Activated T-helper 1 cell treated with anti-CD3 and anti-CD28 coated beads, Interleukin-12 subunit alpha, Interleukin-12 subunit beta, Interleukin-2, Interleukin-4 antibody, amounts not matched to agents 30 ng/mL and 10 ng/mL and 1 ng/mL, durations not matched to agents 14 hours and 24 hours and 36 hours (primary cell): ENCODE measurements at regions of chr10 and their contacts with region 1.

Region 1: DNA sequence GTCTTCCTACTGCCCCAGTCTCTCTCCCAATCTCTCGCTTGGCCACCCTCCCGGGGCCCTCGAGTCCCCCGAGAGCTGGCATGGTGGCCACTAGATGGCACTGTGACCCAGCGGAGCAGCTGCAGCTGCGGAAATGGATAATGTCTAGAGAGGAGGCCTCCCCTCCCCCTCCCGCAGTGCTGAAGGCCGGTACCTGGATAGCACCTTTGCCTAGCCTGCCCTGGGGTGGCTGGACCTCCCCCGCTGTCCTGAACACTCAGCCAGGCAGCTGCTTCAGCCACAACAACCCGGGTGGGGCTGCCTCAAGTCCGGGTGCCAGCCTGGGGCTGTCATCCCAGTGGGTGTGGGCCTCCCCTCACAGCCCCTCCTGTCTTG is 65.2 kb downstream of the GOLGA7B start:
- DNase-seq: peak; percentile 54
- H3K4me3 Mint-ChIP-seq: no peak overlapping the region
- H3K27ac Mint-ChIP-seq: no peak overlapping the region
- H3K4me1 Mint-ChIP-seq: peaks cover 4% of the 10 kb centered on the region
- H3K27me3 Mint-ChIP-seq: peaks cover 6% of the 10 kb centered on the region

Region 2: DNA sequence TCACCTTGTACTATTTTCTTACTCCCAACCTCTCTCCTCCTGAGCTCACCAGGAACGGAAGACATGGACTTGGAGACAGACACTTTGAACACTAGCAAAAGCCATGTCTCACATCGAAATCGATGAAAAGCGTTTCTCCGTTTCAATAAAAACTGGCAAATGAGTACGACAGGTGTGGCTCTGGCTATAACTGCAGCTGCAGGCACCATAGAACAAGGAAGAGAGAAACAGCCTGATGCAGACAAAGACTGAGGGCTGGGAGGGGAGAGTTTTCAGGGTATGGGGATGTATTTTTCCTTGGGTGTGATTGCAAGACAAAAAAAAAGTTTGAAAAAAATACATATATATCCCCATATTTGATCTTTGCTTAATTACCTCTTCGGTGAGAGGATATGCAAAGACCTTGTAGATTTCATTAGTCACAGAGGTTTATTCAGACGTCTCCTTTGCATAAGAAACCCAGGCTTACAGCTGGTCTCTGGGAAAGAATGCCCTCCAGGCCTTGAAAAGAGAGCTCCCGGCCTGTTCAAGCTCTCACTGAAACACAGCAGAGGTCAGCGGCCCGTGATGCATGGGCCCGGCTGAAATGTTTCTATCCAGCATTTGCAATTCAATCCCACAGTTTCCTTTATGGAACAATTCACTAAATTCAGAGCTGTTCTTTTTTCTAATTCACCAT is 1464.2 kb before region 1 on chr10:
- intact Hi-C with region 1: no loop called
- DNase-seq: no peak
- H3K4me3 Mint-ChIP-seq: no peak overlapping the region
- H3K27ac Mint-ChIP-seq: no peak overlapping the region
- H3K4me1 Mint-ChIP-seq: no peaks in the 10 kb centered on the region
- H3K27me3 Mint-ChIP-seq: peaks cover 3% of the 10 kb centered on the region

Region 3: GRCh38 chr10:97903128-97904017 is 11.5 kb before region 1 on chr10:
- intact Hi-C with region 1: no loop called
- DNase-seq: no peak
- H3K4me3 Mint-ChIP-seq: no peak overlapping the region
- H3K27ac Mint-ChIP-seq: no peak overlapping the region
- H3K4me1 Mint-ChIP-seq: no peaks in the 10 kb centered on the region
- H3K27me3 Mint-ChIP-seq: peaks cover 1% of the 10 kb centered on the region

Region 4: GRCh38 chr10:97943294-97943693 is 28.5 kb after region 1 on chr10:
- intact Hi-C with region 1: no loop called
- DNase-seq: no peak
- H3K4me3 Mint-ChIP-seq: no peak overlapping the region
- H3K27ac Mint-ChIP-seq: no peak overlapping the region
- H3K4me1 Mint-ChIP-seq: no peaks in the 10 kb centered on the region
- H3K27me3 Mint-ChIP-seq: peaks cover 8% of the 10 kb centered on the region

Region 5: GRCh38 chr10:98028168-98028770 is 113.4 kb after region 1 on chr10:
- intact Hi-C with region 1: loop called (anchors 5 kb)
- DNase-seq: peak; percentile 27
- H3K4me3 Mint-ChIP-seq: no peak overlapping the region
- H3K27ac Mint-ChIP-seq: no peak overlapping the region
- H3K4me1 Mint-ChIP-seq: no peaks in the 10 kb centered on the region
- H3K27me3 Mint-ChIP-seq: peaks cover 39% of the 10 kb centered on the region

Region 6: DNA sequence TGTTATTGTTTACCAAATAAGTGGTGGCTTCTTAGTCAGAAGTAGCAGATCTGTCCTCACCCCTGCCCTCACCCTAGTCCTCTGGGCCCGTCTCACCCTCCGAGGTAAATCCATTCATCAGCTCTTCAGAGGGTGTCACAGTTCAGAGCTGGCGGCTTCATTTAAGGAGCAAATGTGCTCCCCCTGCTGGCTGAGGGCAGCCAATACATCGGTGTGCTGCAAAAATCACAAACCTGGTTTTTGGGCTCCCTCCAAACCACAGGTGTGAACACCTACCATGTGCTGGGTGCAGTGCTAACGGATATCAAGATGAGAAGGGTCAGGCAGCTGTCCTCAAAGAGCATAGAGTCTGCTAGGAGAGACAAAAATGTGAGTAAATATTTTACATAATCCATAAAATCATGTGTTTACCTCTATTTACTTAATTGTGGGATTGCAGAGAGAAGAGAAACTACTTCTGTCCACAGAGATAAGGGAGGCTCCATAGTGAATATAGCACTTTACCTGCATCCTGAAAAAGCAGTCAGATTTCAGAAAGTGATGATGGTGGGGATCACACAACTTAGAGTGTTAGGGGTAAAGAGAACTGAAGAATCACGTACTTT is 131.1 kb after region 1 on chr10:
- intact Hi-C with region 1: loop called (anchors 1 kb)
- DNase-seq: peak; percentile 32
- H3K4me3 Mint-ChIP-seq: no peak overlapping the region
- H3K27ac Mint-ChIP-seq: no peak overlapping the region
- H3K4me1 Mint-ChIP-seq: no peaks in the 10 kb centered on the region
- H3K27me3 Mint-ChIP-seq: peaks cover 29% of the 10 kb centered on the region

Region 7: GRCh38 chr10:98309366-98310355 is 394.8 kb after region 1 on chr10:
- intact Hi-C with region 1: loop called (anchors 1 kb)
- DNase-seq: no peak
- H3K4me3 Mint-ChIP-seq: no peak overlapping the region
- H3K27ac Mint-ChIP-seq: no peak overlapping the region
- H3K4me1 Mint-ChIP-seq: no peaks in the 10 kb centered on the region
- H3K27me3 Mint-ChIP-seq: peaks cover 17% of the 10 kb centered on the region

Region 8: DNA sequence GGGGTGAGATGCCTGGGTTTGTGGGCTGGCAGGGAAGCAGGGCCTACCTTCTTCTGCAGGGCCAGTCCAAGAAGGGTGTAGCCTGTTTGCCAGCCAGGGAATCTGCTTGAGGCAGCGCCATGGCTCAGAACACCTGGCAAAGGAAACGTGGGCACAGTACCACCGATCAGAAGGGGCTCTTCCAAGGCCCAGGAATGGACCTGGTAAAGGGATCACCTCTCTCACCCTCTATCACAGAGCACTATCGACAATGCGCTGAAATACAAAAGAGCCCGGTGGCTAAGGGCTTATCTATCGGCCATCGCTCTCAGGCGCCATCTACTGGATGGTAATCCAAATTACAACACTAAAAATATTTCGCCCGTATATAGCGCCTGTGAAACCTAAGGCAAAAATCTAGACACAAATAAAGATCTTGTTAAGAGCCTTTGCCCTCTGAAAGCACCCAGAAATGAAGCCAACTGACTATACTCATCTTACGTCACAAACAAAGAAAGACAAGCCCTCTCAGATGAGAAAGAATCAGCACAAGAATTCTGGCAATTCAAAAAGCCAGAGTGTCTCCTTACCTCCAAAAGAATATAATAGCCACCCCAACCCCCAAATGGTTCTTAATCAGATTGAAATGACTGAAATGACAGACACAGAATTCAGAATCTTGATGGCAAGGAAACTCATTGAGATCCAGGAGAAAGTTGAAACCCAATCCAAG is 749.7 kb after region 1 on chr10:
- intact Hi-C with region 1: loop called (anchors 2 kb)
- DNase-seq: peak; percentile 4
- H3K4me3 Mint-ChIP-seq: no peak overlapping the region
- H3K27ac Mint-ChIP-seq: no peak overlapping the region
- H3K4me1 Mint-ChIP-seq: no peaks in the 10 kb centered on the region
- H3K27me3 Mint-ChIP-seq: peaks cover 27% of the 10 kb centered on the region